ENCODE measurements at regions of chr6 and their contacts with region 1.

Region 1: DNA sequence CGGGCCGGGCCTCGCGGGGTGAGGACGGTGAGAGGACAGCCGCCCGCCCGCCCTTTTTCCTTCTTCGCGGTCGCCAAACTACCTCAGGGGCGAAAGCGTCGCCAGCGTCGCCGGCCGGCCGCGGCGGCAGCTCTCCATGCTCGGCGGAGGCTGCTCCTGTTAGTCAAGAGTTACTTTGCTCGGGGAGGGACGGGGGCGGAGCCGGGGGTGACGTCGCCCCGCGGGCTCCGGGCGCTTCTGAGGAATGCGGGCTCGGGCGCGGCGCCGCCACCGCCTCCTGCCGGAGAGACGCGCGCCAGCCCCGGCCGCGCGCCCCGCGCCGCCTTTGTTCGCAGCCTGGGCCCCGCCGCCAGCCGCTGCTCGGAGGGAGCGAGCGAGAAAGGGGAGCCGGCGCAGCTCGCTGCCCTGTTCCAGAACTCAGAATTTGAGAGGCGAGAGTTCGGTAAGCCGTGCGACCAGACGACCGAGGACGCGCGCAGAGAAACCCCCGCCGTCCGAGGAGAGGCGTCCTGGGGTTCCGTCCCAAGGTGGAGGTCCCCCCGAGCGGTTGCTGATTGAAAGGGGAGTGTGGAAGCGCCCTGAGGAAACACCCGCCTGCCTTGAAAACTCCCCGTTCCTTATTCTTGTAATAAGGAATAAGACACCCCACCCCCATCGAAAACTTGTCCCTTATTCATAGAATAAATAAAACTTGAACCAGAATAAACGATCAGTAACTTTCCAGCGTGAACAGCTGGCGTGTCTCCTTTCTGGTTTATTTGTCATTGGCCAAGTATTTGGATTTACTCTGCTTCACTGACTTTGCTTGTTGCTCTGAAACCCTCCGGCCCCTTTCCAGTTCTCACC is at the start of gene PTPRK:
- DNase-seq: peak; percentile 90
- ATAC-seq: peak; percentile 80
- H3K4me3 ChIP-seq: peak within 1 kb of the TSS; percentile 74 to 98 (median 97)
- H3K27ac ChIP-seq: peak within 1 kb of the TSS; percentile 93
- H3K4me1 ChIP-seq: peaks cover 53% of the 10 kb centered on the region
- H3K27me3 ChIP-seq: no peaks in the 10 kb centered on the region; a peak in 1 of 5 replicates
- CTCF ChIP-seq: peak; percentile 43; the same call in 1 of the 2 replicates
- EP300 ChIP-seq: peak; percentile 14 to 31; a peak in 1 of 4 replicates
- POLR2A ChIP-seq: peak; percentile 96 to 97
- RAD21 ChIP-seq: peak; percentile 95
- total RNA-seq, gene PTPRK: 52.4 and 98.3 TPM in 2 replicates

Region 2: DNA sequence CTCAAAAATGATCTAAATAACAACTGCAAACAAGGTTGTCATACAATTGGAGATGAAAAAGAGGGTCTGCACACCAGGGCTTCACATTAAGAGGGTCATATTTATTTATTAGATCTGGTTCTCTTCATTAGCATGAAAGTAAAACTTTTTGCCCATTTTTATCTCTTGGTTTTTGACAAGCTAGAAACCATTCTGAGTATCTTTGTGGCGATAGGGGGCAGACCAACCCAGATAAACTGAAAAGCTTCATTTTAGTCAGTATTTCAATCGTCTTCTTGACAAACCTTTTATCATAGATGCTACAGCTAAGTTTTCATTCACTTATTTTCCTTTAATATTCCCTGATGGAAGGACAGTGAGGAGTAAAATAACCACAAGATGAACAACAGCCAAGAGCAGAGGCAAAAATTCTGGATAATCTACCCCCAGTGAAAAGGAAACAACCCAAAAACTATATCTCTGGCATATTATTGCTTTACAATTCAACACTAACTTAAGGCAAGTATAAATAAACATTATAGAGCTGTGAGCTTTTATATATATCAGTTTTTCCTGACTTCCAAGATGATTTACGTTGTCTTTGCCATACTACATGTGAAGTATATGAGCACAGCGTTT is 665.0 kb before region 1 on chr6:
- CTCF ChIA-PET with region 1: no interaction called
- POLR2A ChIA-PET with region 1: no interaction called
- in situ Hi-C with region 1: no loop called
- intact Hi-C with region 1: loop called (anchors 10 kb)
- DNase-seq: peak; percentile 24
- ATAC-seq: peak; percentile 71
- H3K4me3 ChIP-seq: no peak overlapping the region
- H3K27ac ChIP-seq: no peak overlapping the region
- H3K4me1 ChIP-seq: no peaks in the 10 kb centered on the region
- H3K27me3 ChIP-seq: no peaks in the 10 kb centered on the region
- CTCF ChIP-seq: peak; percentile 68
- EP300 ChIP-seq: no peak
- POLR2A ChIP-seq: no peak
- RAD21 ChIP-seq: peak; percentile 41; the same call in 1 of the 2 replicates

Region 3: DNA sequence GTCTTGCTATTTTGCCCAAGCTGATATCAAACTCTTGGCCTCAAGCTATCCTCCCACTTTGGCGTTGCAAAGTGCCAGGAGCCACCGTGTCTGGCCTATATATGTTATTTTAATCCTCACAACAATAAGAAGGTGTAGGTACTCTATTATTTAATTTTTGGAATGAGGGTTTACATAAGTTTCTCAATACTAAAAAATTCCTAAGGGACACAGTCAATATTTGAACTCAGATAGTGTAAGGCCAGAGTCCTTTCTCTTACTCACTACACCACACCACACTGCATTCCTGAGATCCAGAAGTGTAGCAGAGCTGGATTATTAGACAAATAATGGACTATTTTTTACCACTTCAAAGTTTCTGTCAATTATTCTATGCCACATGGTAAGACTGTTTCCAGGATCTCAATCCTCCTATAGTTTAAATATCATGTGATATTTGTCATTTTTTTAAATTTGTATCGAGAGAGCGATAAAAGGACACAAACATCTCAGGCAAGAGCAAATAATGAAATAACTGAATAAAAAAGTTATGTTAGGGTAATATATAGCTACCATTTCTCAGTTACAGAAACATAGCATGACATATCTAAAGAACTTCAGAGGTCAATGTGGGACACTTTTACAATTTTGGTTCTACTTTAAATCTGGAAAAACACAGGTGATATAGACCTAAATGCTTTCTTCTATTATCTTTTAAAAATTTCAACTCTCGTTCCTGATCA is 457.6 kb before region 1 on chr6:
- CTCF ChIA-PET with region 1: no interaction called
- POLR2A ChIA-PET with region 1: interaction called, 12 read pairs
- in situ Hi-C with region 1: no loop called
- intact Hi-C with region 1: loop called (anchors 1 kb)
- DNase-seq: peak; percentile 98
- ATAC-seq: peak; percentile 99
- H3K4me3 ChIP-seq: peak overlapping the region in 1 of 3 experiments; percentile 5; a peak in 1 of 6 replicates
- H3K27ac ChIP-seq: peak overlapping the region; percentile 77
- H3K4me1 ChIP-seq: peaks cover 54% of the 10 kb centered on the region
- H3K27me3 ChIP-seq: no peaks in the 10 kb centered on the region
- CTCF ChIP-seq: no peak
- EP300 ChIP-seq: peak; percentile 98 to 99
- POLR2A ChIP-seq: no peak
- RAD21 ChIP-seq: peak; percentile 38; the same call in 1 of the 2 replicates

Region 4: DNA sequence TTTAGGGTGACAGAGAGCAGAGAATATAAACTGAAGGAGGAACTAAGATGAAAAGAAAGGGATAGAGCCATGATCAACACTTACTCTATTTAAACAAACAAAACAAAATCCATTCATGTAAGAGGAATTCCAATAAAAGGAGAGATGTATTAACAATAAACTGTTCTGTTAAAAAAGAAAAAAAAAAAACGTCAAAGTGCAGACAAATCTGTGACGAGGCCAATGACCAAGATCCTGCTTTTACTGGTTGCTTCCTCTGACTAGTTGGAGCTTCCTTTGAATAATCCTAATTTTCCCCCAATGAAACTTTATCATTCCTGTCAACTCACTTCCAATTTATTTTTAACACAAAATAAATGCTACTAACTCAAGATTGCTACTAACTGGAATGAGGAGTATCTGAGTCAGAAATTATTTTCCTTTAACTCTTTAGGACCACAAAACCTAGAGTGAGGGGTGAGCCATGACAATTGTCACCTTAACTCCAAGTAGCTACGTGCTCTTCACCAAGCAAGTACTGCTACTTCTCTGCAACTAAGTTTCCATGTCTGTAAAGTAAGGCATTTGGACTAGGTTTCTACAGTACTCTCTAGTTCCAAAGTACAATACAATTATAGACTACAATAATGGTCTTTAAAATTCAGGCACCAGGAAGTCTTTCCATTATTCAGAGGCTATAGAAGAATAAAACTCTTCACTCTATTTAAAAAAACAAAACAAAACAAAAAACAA is 152.3 kb before region 1 on chr6:
- CTCF ChIA-PET with region 1: no interaction called
- POLR2A ChIA-PET with region 1: no interaction called
- in situ Hi-C with region 1: no loop called
- intact Hi-C with region 1: loop called (anchors 5 kb)
- DNase-seq: no peak
- ATAC-seq: no peak; the same call in 2 of the 3 replicates
- H3K4me3 ChIP-seq: no peak overlapping the region
- H3K27ac ChIP-seq: peak overlapping the region; percentile 28
- H3K4me1 ChIP-seq: peaks cover 67% of the 10 kb centered on the region
- H3K27me3 ChIP-seq: no peaks in the 10 kb centered on the region
- CTCF ChIP-seq: no peak
- EP300 ChIP-seq: no peak
- POLR2A ChIP-seq: no peak
- RAD21 ChIP-seq: no peak

Region 5: GRCh38 chr6:128463942-128464341 is 56.7 kb before region 1 on chr6:
- CTCF ChIA-PET with region 1: no interaction called
- POLR2A ChIA-PET with region 1: no interaction called
- in situ Hi-C with region 1: no loop called
- intact Hi-C with region 1: loop called (anchors 2 kb)
- DNase-seq: no peak
- ATAC-seq: no peak
- H3K4me3 ChIP-seq: no peak overlapping the region
- H3K27ac ChIP-seq: no peak overlapping the region
- H3K4me1 ChIP-seq: peaks cover 18% of the 10 kb centered on the region
- H3K27me3 ChIP-seq: no peaks in the 10 kb centered on the region
- CTCF ChIP-seq: no peak
- EP300 ChIP-seq: no peak
- POLR2A ChIP-seq: no peak
- RAD21 ChIP-seq: no peak

Region 6: DNA sequence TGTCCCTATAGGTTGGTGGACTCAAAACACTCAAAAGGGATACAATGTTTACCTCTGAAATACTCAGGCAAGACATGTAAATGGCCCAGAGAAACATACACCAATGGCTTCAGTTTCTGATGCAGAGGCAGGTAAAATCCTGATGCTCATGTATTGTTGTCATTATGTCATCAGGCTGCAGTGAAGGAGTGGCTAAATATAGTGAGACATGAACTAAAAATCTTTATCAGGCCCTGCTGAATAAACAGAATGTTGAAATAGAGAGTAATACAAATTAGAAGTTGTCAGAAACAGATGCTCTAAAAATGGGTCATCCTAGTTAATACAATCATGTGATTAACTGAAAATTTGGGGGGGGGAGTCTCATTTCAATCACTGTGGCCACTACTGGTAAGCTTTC is 20.6 kb before region 1 on chr6:
- CTCF ChIA-PET with region 1: no interaction called
- POLR2A ChIA-PET with region 1: interaction called, 134 read pairs
- in situ Hi-C with region 1: no loop called
- intact Hi-C with region 1: no loop called
- DNase-seq: peak; percentile 41
- ATAC-seq: no peak
- H3K4me3 ChIP-seq: no peak overlapping the region; a peak in 1 of 6 replicates
- H3K27ac ChIP-seq: peak overlapping the region; percentile 91
- H3K4me1 ChIP-seq: peaks cover 100% of the 10 kb centered on the region
- H3K27me3 ChIP-seq: no peaks in the 10 kb centered on the region
- CTCF ChIP-seq: no peak
- EP300 ChIP-seq: no peak; a peak in 1 of 4 replicates
- POLR2A ChIP-seq: no peak
- RAD21 ChIP-seq: no peak

Region 7: DNA sequence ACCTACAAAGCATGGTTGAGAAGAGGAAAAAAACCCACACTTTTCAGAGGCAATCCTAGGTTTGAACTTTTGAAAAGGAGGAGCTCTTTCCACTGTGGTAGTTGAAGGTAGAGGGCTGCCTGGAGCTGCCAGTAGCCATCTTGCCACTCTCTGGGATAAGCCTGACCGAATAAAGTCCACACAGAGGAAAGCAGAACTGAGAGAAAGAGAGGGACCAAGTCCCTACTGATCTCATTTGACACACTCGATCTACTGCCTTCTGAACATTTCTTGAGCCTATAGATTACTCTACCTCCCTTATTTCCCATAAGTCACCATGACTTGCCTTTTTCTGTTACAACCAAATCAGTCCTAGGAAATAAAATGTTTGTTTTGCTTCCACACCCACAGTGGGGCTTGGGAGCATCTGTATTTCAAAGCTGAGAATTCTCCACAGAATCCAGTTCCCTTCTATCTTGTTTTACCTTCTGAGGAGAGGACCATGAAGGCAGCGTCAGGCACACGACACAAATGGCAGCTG is 146.7 kb after region 1 on chr6:
- CTCF ChIA-PET with region 1: no interaction called
- POLR2A ChIA-PET with region 1: no interaction called
- in situ Hi-C with region 1: no loop called
- intact Hi-C with region 1: no loop called
- DNase-seq: no peak
- ATAC-seq: no peak
- H3K4me3 ChIP-seq: no peak overlapping the region
- H3K27ac ChIP-seq: no peak overlapping the region
- H3K4me1 ChIP-seq: no peaks in the 10 kb centered on the region
- H3K27me3 ChIP-seq: no peaks in the 10 kb centered on the region
- CTCF ChIP-seq: no peak
- EP300 ChIP-seq: no peak
- POLR2A ChIP-seq: no peak
- RAD21 ChIP-seq: no peak